Aorta (tissue), 5 donors: ENCODE measurements at regions of chr2 and their contacts with region 1.

Region 1: GRCh38 chr2:48420512-48421197 is 109.3 kb upstream of the STON1 start:
- DNase-seq: peak; percentile 91 to 97
- ATAC-seq: peak; percentile 95
- H3K4me3 ChIP-seq: no peak overlapping the region
- H3K27ac ChIP-seq: no peak overlapping the region
- H3K4me1 ChIP-seq: no peaks in the 10 kb centered on the region
- H3K27me3 ChIP-seq: no peaks in the 10 kb centered on the region

Region 2: GRCh38 chr2:47850198-47850597 is 570.5 kb before region 1 on chr2:
- intact Hi-C with region 1: loop called (anchors 5 to 10 kb)
- DNase-seq: no peak
- ATAC-seq: no peak
- H3K4me3 ChIP-seq: no peak overlapping the region
- H3K27ac ChIP-seq: no peak overlapping the region
- H3K4me1 ChIP-seq: no peaks in the 10 kb centered on the region
- H3K27me3 ChIP-seq: no peaks in the 10 kb centered on the region

Region 3: GRCh38 chr2:47862949-47863348 is 557.7 kb before region 1 on chr2:
- intact Hi-C with region 1: loop called (anchors 5 to 10 kb)
- DNase-seq: no peak
- ATAC-seq: no peak
- H3K4me3 ChIP-seq: no peak overlapping the region
- H3K27ac ChIP-seq: no peak overlapping the region
- H3K4me1 ChIP-seq: no peaks in the 10 kb centered on the region
- H3K27me3 ChIP-seq: no peaks in the 10 kb centered on the region

Region 4: GRCh38 chr2:47906157-47907038 is 514.3 kb before region 1 on chr2 and contains the start of gene FBXO11:
- intact Hi-C with region 1: loop called in 1 of 2 experiments (anchors 10 kb)
- DNase-seq: peak; percentile 96 to 98
- ATAC-seq: peak; percentile 96
- H3K4me3 ChIP-seq: peak within 1 kb of the TSS; percentile 98 to 99
- H3K27ac ChIP-seq: peak within 1 kb of the TSS; percentile 80 to 99
- H3K4me1 ChIP-seq: no peaks in the 10 kb centered on the region
- H3K27me3 ChIP-seq: no peaks in the 10 kb centered on the region
- total RNA-seq, gene FBXO11: 64.8 to 80.4 TPM

Region 5: DNA sequence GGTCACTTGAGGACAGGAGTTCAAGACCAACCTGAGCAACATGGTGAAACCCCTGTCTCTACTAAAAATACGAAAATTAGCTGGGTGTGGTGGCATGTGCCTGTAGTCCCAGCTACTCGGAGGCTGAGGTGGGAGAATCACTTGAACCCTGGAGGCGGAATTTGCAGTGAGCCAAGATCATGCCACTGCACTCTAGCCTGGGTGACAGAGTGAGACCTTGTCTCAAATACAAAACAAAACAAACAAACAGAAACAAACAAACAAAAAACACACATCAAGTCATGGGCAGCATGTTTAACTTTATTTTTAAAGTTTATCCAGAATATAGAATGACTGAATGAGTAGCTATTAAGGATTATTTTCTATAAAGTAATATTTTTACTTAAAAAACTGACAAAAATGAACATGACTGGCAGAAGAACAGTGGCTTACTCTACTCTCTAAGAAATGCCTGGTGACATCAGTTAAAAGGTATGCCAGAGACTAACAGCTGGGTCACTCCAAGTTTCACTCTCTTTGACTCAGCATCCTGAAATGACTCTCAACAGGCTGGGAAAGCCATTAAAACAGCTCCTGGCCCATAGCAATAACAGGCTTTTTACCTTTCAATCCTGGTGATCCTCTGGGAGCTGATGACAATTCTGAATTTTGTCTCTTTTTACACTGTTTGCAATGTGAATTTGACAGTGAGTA is 172.3 kb before region 1 on chr2:
- intact Hi-C with region 1: loop called in 1 of 2 experiments (anchors 10 kb)
- DNase-seq: no peak
- ATAC-seq: peak; percentile 82
- H3K4me3 ChIP-seq: no peak overlapping the region
- H3K27ac ChIP-seq: no peak overlapping the region
- H3K4me1 ChIP-seq: peaks cover 3 to 6% of the 10 kb centered on the region in 2 donors
- H3K27me3 ChIP-seq: no peaks in the 10 kb centered on the region